Mucosa of descending colon (tissue), 3 donors: ENCODE measurements at regions of chr5 and their contacts with region 1.

Region 1: GRCh38 chr5:172770675-172771438 is at the start of gene DUSP1:
- DNase-seq: peak; percentile 99 to 100 (median 99)
- ATAC-seq: peak; percentile 67
- H3K4me3 ChIP-seq: peak within 1 kb of the TSS; percentile 86
- H3K4me1 ChIP-seq: peaks cover 67% of the 10 kb centered on the region
- CTCF ChIP-seq: peak; percentile 29
- total RNA-seq, gene DUSP1: 90.9 to 233 (median 137) TPM

Region 2: GRCh38 chr5:172714491-172715421 is 56.1 kb before region 1 on chr5:
- intact Hi-C with region 1: loop called in 1 of 2 experiments (anchors 5 kb)
- DNase-seq: peak; percentile 73 to 88 (median 75)
- ATAC-seq: peak; percentile 81
- H3K4me3 ChIP-seq: no peak overlapping the region
- H3K4me1 ChIP-seq: peaks cover 9% of the 10 kb centered on the region
- CTCF ChIP-seq: peak; percentile 88

Region 3: DNA sequence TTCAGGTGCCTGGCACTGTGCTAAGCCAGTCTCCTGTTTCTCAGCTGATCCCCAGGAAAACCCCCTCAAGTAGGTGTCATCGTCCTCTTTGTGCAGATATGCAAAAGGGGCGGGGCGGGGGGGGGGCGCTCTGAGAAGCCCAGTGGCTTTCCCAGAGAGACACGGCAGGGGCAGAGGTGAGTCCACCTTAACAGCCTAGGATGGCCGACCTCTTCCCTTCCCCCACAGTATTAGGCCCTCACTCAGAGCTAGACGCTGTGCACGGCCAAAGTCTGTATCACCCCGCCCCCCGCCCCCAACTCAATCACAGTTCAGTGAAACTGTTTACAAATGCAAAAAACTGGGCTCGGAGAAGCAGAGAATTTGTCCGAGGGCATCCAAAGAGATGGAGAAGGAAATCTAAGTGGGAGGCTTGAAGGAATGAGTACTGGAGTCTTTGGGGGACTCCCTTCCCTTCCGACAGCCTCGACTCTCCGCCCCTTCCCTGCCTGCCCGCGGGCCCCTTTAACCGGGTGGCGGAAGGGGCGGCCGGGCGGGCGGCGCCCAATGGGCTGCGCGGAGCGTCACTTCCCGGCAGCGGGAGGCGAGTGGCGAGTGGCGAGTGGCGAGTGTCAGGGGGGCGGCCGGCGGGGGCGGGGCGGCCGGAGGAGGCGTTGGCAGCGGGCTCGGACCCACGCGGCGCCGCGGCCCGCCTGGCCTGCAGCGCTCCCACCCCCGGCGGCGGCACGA is 63.0 kb after region 1 on chr5 and contains the start of gene ERGIC1:
- intact Hi-C with region 1: no loop called
- DNase-seq: peak; percentile 88 to 94 (median 93)
- ATAC-seq: peak; percentile 86
- H3K4me3 ChIP-seq: peak within 1 kb of the TSS; percentile 80
- H3K4me1 ChIP-seq: peaks cover 28% of the 10 kb centered on the region
- CTCF ChIP-seq: no peak
- total RNA-seq, gene ERGIC1: 153 to 222 (median 199) TPM

Region 4: DNA sequence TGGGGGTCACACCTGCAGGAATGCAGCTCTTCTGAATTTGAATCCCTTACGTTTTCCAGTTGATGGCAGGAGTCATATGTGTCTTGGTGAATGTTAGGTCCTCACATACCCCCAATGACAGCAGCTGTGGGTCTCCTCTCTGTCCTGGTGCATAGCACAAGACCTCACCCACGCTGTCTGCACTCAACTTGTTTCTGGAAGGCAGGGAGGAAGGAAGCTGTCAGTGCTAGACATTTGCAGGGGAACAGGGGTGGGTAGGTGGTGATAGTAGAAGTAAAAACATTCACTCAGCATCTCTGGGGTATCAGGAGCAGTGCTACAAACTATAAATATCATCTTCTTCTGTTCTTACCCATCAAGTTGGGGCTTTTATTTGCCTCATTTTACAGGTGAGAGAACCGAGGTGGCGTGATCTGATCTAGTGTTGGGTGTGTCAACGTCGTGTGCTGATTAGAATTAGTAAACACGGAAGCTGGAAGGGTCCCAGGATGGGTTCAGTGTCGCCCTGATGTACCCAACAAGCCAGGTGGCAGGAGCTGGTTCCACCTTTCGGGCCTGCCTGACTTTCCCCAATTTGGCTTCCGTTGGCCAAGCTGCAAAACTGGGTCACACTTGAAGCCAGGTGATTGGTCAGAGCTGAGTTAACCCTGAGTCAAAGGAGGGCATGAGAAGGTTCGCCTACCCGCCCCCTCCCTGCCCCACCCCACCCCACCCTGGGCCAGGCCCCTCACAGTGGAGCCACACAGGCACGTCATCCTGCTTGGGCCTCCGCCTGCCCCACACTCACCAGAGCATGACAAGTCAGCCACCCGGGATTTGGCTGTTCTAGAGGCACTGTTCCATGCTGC is 79.0 kb after region 1 on chr5:
- intact Hi-C with region 1: loop called in 1 of 2 experiments (anchors 10 kb)
- DNase-seq: peak; percentile 76 to 87 (median 82)
- ATAC-seq: peak; percentile 81
- H3K4me3 ChIP-seq: no peak overlapping the region
- H3K4me1 ChIP-seq: peaks cover 49% of the 10 kb centered on the region
- CTCF ChIP-seq: no peak

Region 5: DNA sequence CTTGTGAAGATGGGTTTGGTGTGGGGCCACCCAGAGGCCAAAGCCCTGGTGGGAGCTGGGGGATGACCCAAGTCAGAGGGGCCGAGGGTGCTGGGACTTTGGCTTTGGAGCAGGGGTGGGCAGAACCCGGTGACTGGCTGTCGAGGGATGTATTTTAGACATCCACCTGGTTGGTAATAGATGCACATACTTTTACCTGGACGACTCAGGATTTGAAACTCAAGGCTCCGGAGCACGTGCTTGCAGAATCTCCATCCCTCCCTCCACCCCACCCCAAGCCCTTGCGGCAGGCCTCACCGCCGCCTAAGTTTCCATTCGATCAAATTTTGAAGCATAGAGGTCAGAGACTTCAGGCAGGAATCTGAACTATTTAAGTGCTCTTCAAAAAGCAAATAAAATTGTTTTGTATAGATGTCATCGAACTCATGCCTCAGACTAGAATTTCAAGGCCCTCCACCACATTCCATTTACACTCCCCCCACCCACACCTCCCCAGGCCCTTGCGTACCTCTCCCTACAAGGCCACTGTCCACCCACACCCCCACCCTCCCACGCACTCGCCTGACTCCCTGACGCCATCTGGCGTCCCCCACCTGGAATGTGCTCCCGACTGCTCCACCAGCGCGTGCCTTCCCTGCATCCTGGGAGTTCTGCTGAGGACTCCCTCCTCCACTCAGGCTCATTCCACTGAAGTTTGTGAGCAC is 131.8 kb after region 1 on chr5:
- intact Hi-C with region 1: loop called in 1 of 2 experiments (anchors 10 kb)
- DNase-seq: peak in 2 of 3 donors; percentile 66 to 74
- ATAC-seq: no peak
- H3K4me3 ChIP-seq: no peak overlapping the region
- H3K4me1 ChIP-seq: peaks cover 30% of the 10 kb centered on the region
- CTCF ChIP-seq: no peak